Activated B cell treated with CpG ODN at 0.5 μM for 24 hours (primary cell): ENCODE measurements at regions of chr20 and their contacts with region 1.

Region 1: DNA sequence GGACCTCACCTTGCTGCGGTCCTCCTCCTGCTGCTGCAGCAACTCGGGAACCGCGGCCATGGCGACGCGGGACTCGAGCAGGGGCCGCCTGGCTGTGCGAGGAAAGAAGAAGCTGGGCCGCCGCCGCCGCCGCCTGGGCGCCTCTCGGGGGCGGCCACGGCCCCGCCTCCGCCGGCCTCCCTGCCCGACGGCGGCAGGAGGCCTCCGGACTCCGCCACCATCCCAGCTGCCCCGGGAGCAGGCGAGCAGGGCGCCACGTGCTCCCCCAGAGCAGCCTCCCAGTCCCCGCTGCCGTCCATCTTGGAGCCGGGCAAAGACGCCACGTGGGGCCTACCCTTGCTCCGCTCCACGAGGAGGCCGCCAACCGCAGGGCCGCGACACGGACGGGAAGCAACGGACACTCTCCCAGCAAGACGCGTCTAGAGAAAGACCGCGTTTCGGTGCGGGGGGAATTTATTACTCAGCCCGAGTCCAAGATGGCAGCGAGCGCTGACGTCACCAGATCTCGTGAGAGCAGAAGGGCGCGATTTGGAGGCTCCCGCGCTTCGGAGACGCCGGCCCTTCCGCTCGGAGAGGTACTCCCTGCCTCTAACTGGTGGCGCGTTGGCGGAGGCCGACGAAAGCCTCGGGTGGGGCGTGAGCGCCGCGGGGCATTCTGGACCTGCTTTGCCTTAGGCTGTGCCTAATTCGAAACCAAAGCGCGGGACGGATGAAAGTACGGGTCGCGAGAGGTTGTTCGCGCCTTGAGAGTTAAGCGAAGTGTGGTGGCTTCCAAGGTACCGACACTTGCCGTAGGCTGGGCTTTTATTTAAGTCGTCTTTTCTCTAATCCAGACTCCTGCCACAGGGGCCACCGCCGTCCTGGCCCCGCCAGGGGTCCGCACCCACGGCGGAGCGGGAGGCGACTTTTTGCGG is at the starts of genes MGME1 and SNX5:
- DNase-seq: peak; percentile 98
- ATAC-seq: peak; percentile 83
- H3K4me3 Mint-ChIP-seq: peak within 1 kb of the TSS; percentile 97
- H3K27ac Mint-ChIP-seq: peak within 1 kb of the TSS; percentile 97
- H3K4me1 Mint-ChIP-seq: peaks cover 78% of the 10 kb centered on the region
- H3K27me3 Mint-ChIP-seq: no peaks in the 10 kb centered on the region
- CTCF ChIP-seq: no peak
- total RNA-seq, gene MGME1: 19.0 TPM in 2 replicates
- total RNA-seq, gene SNX5: 125 and 139 TPM in 2 replicates

Region 2: GRCh38 chr20:17569616-17570346 is 398.8 kb before region 1 on chr20 and contains the start of gene DSTN:
- CTCF ChIA-PET with region 1: no interaction called
- POLR2A ChIA-PET with region 1: interaction called, 4 read pairs
- intact Hi-C with region 1: loop called (anchors 1 kb)
- DNase-seq: peak; percentile 88
- ATAC-seq: peak; percentile 89
- H3K4me3 Mint-ChIP-seq: peak within 1 kb of the TSS; percentile 93
- H3K27ac Mint-ChIP-seq: peak within 1 kb of the TSS; percentile 85
- H3K4me1 Mint-ChIP-seq: peaks cover 16% of the 10 kb centered on the region
- H3K27me3 Mint-ChIP-seq: peaks cover 2% of the 10 kb centered on the region
- CTCF ChIP-seq: no peak
- total RNA-seq, gene DSTN: 14.4 and 20.1 TPM in 2 replicates

Region 3: GRCh38 chr20:17958373-17959256 is 10.0 kb before region 1 on chr20:
- CTCF ChIA-PET with region 1: interaction called, 10 read pairs
- POLR2A ChIA-PET with region 1: interaction called, 96 read pairs
- intact Hi-C with region 1: no loop called
- DNase-seq: no peak
- ATAC-seq: no peak
- H3K4me3 Mint-ChIP-seq: peak overlapping the region; percentile 57
- H3K27ac Mint-ChIP-seq: peak overlapping the region; percentile 90
- H3K4me1 Mint-ChIP-seq: peaks cover 94% of the 10 kb centered on the region
- H3K27me3 Mint-ChIP-seq: no peaks in the 10 kb centered on the region
- CTCF ChIP-seq: no peak

Region 4: DNA sequence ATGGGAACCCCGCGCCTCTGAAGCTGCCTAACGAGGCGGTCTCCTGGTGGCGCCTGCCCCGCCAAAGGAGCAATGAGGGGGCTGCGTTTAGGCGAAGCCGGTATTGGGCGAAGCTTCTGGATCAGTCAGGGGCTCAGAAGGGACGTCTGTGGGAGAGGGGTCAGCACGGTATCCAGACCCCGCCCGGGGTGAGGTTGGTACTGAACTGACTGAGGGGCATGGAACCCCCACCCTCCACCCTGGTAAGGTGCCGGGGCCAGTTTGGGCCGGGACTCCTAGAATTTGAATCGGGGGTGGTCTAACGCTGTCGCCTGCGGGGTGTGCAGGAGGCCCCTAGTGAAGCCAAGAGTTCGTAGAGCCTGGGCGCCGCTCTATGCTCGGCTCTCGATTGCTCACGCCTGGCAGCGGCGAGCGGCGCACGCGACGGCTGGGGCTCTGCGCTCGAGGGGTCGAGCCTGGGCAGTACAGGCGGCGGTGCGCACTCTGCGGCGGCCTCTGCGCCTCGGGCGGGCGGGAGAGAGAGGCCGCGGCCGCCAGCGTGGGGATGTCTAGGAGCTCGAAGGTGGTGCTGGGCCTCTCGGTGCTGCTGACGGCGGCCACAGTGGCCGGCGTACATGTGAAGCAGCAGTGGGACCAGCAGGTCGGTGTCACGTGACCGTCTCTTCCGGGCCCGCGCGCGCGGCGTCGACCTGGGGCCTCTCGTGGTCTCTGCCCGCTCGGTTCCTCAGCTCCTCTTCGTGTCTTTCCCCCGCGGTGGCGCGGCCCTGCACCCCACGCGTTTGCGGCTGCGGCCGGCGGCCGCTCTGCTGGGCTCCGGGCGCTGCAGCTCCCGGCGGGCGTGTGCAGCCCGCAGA is 169.0 kb after region 1 on chr20 and contains the starts of genes KAT14 and PET117:
- CTCF ChIA-PET with region 1: no interaction called
- POLR2A ChIA-PET with region 1: interaction called, 11 read pairs
- intact Hi-C with region 1: loop called (anchors 1 kb)
- DNase-seq: peak; percentile 96
- ATAC-seq: peak; percentile 91
- H3K4me3 Mint-ChIP-seq: peak within 1 kb of the TSS; percentile 90
- H3K27ac Mint-ChIP-seq: peak within 1 kb of the TSS; percentile 87
- H3K4me1 Mint-ChIP-seq: peaks cover 23% of the 10 kb centered on the region
- H3K27me3 Mint-ChIP-seq: no peaks in the 10 kb centered on the region
- CTCF ChIP-seq: no peak
- total RNA-seq, gene KAT14: 14.9 and 15.6 TPM in 2 replicates
- total RNA-seq, gene PET117: 10.1 and 13.6 TPM in 2 replicates

Region 5: GRCh38 chr20:18507218-18508021 is 538.8 kb after region 1 on chr20 and contains the start of gene SEC23B:
- CTCF ChIA-PET with region 1: no interaction called
- POLR2A ChIA-PET with region 1: interaction called, 4 read pairs
- intact Hi-C with region 1: loop called (anchors 1 kb)
- DNase-seq: peak; percentile 92
- ATAC-seq: peak; percentile 92
- H3K4me3 Mint-ChIP-seq: peak within 1 kb of the TSS; percentile 100
- H3K27ac Mint-ChIP-seq: peak within 1 kb of the TSS; percentile 100
- H3K4me1 Mint-ChIP-seq: peaks cover 36% of the 10 kb centered on the region
- H3K27me3 Mint-ChIP-seq: peaks cover 2% of the 10 kb centered on the region
- CTCF ChIP-seq: no peak
- total RNA-seq, gene SEC23B: 52.0 and 56.6 TPM in 2 replicates

Region 6: GRCh38 chr20:19706463-19706862 is 1737.8 kb after region 1 on chr20:
- CTCF ChIA-PET with region 1: no interaction called
- POLR2A ChIA-PET with region 1: no interaction called
- intact Hi-C with region 1: loop called (anchors 10 kb)
- DNase-seq: peak; percentile 34
- ATAC-seq: peak; percentile 96
- H3K4me3 Mint-ChIP-seq: no peak overlapping the region
- H3K27ac Mint-ChIP-seq: no peak overlapping the region
- H3K4me1 Mint-ChIP-seq: peaks cover 25% of the 10 kb centered on the region
- H3K27me3 Mint-ChIP-seq: no peaks in the 10 kb centered on the region
- CTCF ChIP-seq: no peak